Posterior cingulate gyrus (tissue), 11 donors: ENCODE measurements at regions of chr1 and their contacts with region 1.

Region 1: GRCh38 chr1:113042285-113043143 is 30.5 kb upstream of the LRIG2 start:
- DNase-seq: peak; percentile 53 to 96 (median 76)

Region 2: DNA sequence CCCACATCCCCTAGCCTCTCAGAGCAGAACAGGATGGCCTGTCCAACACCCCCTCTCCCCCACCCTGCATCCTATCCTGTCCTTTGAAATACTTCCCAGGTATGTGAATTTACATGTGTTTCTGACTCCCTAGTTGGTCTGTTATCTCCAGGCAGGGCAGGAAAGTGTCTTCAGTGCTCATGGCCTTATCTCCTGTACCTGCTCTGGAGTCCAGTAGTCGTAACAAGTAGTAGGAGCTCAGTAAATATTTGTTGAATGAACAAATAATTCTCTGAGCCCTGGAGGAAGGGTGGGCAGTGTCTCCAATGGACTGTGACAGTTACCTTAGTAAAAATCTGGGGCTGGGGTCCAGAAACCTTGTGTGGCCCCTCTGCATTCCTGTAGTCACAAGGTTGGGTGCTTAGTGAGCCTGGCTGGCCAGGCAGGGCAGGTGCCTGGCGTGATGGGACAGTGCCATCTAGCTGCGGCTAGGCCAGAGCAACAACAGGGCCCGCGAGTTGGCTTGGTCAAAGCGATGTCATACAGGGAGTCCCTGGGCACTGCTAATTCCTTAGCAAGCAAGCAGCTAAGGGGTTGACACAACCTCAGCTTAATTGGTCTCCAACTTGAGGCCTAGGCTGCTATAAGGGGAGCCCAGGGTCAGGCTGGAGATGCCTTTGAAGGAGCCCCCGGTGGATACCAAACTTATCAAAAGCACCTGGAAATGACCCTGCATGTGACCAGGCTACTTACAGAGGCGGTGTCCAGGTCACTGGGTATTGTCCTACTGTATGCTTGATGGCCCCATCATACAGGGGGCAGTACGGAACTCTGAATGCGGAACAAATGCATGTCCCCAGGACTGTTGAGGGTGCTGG is 238.4 kb before region 1 on chr1:
- intact Hi-C with region 1: loop called (anchors 10 kb)
- DNase-seq: peak; percentile 57 to 97 (median 76)

Region 3: DNA sequence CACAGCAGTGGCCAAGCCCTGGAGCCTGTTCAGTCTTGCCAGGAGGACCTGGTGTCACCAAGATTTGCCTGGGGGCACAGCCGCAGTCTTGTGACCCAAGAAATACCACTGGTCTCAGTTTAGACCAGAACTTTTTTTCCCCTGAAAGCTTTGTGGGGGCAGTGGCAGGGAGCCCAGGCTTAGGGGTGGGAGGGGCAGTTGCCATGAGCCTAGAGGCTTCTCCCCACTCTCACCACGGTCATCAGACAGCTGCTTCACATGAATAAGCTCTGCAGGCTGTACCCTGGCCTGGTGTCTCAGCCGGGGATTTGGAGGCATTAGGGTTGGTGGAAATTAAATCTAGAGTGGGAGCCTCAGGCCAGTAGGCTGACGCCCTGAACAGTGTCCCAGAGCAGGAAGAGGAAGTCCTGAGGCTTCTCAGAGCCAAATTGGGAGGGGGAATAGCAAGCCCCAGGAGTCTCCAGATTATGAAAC is 160.2 kb before region 1 on chr1:
- intact Hi-C with region 1: loop called (anchors 2 kb)
- DNase-seq: peak in 3 of 10 donors; percentile 13 to 86 (median 83)